Activated CD4-positive, alpha-beta T cell treated with anti-CD3 and anti-CD28 coated beads for 36 hours (primary cell): ENCODE measurements at regions of chr16 and their contacts with region 1.

Region 1: DNA sequence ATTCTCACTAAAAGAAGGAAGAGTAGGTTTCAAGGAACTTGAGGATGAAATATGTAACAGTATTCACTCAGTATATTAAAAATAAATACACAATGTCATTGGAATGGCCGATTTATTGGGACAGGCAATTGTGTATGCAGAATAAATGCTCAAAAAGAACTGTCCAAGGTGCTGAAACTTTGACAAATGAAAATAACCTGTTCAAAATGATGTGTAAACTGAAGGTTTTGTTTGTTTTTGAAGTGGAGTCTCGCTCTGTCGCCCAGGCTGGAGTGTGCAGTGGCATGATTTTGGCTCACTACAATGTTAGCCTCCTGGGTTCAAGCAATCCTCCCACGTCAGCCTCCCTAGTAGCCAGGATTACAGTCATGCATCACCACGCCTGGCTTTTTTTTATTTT is 318.7 kb upstream of the RBFOX1 start:
- DNase-seq: no peak
- ATAC-seq: no peak
- H3K4me3 Mint-ChIP-seq: no peak overlapping the region
- H3K27ac Mint-ChIP-seq: no peak overlapping the region
- H3K4me1 Mint-ChIP-seq: no peaks in the 10 kb centered on the region
- H3K27me3 Mint-ChIP-seq: no peaks in the 10 kb centered on the region

Region 2: DNA sequence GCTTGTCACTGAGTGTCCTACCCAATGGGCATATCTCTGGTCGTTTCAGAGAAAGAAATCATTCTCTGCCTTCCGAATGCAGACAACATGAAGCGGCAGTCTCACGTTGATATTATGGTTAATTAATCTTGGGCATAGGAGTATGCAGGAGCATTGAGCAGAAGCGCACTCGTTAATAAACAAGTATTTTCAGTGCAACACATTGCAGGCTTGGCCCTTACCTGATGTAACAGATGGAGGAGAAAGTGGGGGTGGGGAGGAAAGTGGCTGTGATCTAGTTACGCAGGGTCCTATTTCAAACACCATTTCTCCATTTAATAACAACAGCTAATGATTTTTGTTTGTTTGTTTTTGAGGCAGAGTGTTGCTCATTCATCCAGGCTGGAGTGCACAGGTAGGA is 95.3 kb before region 1 on chr16:
- CTCF ChIA-PET with region 1: no interaction called
- POLR2A ChIA-PET with region 1: no interaction called
- intact Hi-C with region 1: no loop called
- DNase-seq: no peak
- ATAC-seq: no peak
- H3K4me3 Mint-ChIP-seq: no peak overlapping the region
- H3K27ac Mint-ChIP-seq: no peak overlapping the region
- H3K4me1 Mint-ChIP-seq: no peaks in the 10 kb centered on the region
- H3K27me3 Mint-ChIP-seq: no peaks in the 10 kb centered on the region

Region 3: GRCh38 chr16:6957681-6958080 is 56.3 kb before region 1 on chr16:
- CTCF ChIA-PET with region 1: no interaction called
- POLR2A ChIA-PET with region 1: no interaction called
- intact Hi-C with region 1: loop called in 1 of 2 experiments (anchors 10 kb)
- DNase-seq: no peak
- ATAC-seq: no peak
- H3K4me3 Mint-ChIP-seq: no peak overlapping the region
- H3K27ac Mint-ChIP-seq: no peak overlapping the region
- H3K4me1 Mint-ChIP-seq: no peaks in the 10 kb centered on the region
- H3K27me3 Mint-ChIP-seq: no peaks in the 10 kb centered on the region